ENCODE measurements at regions of chr6 and their contacts with region 1.

Region 1: GRCh38 chr6:45365036-45365435 is 12.7 kb downstream of the SUPT3H start:
- DNase-seq: no peak
- H3K4me3 ChIP-seq: no peak overlapping the region
- H3K27ac ChIP-seq: no peak overlapping the region
- H3K4me1 ChIP-seq: no peaks in the 10 kb centered on the region
- H3K27me3 ChIP-seq: no peaks in the 10 kb centered on the region
- CTCF ChIP-seq: no peak
- EP300 ChIP-seq: no peak
- POLR2A ChIP-seq: no peak
- RAD21 ChIP-seq: no peak

Region 2: GRCh38 chr6:45377554-45378333 is 12.7 kb after region 1 on chr6 and contains the start of gene SUPT3H:
- CTCF ChIA-PET with region 1: interaction called, 3 read pairs
- POLR2A ChIA-PET with region 1: interaction called, 20 read pairs
- DNase-seq: peak; percentile 90 to 91
- H3K4me3 ChIP-seq: peak within 1 kb of the TSS; percentile 83 to 92 (median 89)
- H3K27ac ChIP-seq: peak within 1 kb of the TSS; percentile 86
- H3K4me1 ChIP-seq: peaks cover 0 to 4% (median 3%) of the 10 kb centered on the region in 4 experiments; a peak in 4 of 7 replicates
- H3K27me3 ChIP-seq: no peaks in the 10 kb centered on the region
- CTCF ChIP-seq: no peak
- EP300 ChIP-seq: no peak
- POLR2A ChIP-seq: peak; percentile 61 to 76; a peak in 2 of 3 replicates
- RAD21 ChIP-seq: peak; percentile 3 to 9; a peak in 1 of 4 replicates
- total RNA-seq, gene SUPT3H: 18.8 and 25.0 TPM in 2 replicates